ENCODE measurements at regions of chr11 and their contacts with region 1.

Region 1: DNA sequence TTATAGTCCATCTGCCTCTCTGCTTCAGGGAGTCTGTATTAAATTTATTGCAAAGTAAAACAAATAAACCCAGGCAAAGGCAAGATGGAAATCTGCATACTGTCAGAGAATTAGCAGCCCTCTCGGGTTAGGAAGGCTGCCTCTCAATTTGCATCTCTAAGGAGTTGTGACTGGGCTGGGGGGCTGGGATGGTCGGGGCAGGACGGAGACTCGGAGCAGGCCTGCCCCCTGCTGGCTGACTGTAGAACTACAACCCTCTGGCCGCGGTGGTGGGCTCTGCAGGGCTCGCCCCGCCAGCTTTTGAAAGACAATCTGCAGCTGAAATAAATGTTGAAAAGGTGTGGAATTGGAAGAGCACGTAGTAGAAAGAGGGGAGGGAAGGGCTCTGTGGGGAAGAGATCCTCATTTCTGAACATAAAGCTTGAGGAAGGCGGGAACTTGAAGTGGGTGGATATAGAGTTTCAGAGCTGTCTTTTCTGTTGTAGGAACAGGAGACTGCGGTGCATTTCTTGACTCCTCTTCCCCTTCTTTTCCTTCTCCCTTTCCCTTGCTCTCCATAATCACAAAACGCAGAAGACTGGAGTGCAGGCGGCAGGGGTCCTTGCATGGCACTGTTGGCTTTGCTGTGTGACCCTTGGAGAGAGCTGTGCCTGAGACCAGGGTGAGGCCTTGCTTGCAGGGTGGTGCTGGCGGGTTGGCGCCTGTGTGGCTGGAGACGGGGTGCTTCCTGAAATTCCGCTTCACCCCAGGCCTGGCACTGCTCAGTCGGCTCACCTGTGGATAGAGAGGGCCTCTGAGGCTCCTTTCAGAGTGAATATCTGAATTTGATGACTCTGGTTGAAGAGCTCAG is 22.6 kb upstream of the PKNOX2 start:
- DNase-seq: peak; percentile 59
- ATAC-seq: peak; percentile 89
- H3K4me3 Mint-ChIP-seq: no peak overlapping the region
- H3K27ac Mint-ChIP-seq: no peak overlapping the region
- H3K4me1 Mint-ChIP-seq: no peaks in the 10 kb centered on the region
- H3K27me3 Mint-ChIP-seq: peaks cover 28% of the 10 kb centered on the region

Region 2: DNA sequence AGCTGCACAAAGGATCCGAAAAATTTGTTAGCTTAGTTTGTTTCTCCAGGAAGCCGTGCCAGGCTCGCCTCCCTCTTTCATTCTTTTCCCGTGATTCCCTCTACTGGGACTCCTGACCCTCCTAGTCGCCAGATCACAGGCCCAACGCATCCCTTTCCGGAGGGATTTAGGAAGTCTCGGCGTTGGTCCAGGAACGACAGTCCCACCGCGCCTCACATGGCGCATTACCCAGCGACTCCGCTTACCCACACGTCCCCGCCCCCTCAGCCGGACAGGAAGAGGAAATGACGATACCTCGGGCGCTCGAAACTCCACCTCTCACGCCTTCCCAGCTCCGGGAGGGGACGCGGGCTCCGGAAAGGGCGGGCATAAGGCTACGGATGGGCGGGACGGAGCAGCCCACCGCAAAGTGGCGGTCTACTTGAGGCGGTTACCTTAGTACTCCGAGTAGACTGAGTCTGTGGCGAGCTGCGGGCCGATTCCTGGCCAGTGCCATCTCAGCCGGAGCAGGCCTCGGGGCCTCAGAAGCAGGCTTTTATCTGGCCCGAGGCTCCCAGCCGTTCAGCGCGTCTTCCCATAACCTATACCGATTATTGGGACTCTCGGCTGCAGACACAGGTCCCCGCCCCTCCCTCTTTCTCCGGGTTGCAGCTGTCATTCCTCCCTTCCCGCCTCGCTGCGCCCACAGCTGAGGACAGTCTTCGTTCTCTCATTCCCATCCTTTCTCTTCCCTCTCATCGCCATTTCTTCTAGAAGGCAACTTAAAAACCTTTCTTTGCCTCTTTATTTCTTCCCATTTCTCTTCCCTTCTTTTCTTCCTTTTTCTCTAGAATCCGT is 187.9 kb before region 1 on chr11 and contains the start of gene CCDC15:
- CTCF ChIA-PET with region 1: interaction called, 20 read pairs
- DNase-seq: peak; percentile 98
- ATAC-seq: peak; percentile 94
- H3K4me3 Mint-ChIP-seq: no peak within 1 kb of the TSS
- H3K27ac Mint-ChIP-seq: no peak within 1 kb of the TSS
- H3K4me1 Mint-ChIP-seq: peaks cover 20% of the 10 kb centered on the region
- H3K27me3 Mint-ChIP-seq: no peaks in the 10 kb centered on the region
- total RNA-seq, gene CCDC15: 5.6 to 9.4 TPM

Region 3: DNA sequence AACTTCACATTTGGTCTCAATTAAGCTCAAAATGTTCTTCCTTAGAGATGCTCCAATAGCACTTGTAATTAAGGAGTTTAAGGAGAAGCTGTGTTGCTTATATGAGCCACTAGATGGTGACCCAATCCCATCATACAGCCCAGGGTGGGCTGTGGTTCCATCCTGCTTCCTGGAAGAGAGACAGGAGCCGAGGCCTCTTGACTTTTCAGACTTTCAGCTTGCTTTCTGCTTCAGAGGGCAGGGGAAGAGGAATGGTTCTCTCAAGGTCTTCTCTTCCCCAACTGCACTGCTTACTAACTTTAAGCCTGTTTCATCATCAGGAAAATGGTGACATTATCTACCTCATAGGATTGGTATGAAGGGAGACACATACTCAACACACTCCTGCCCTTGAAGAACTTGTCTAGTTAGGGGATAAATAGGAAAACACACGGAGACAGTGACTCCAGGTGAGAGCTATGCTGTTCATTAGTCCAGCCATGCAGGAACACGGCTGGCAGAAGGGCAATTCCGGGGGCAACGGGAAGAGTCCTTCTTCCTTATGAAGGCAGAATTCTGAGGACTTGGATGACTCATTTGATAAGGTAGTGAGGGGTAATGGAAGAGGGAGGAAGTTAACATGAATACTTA is 50.5 kb before region 1 on chr11:
- CTCF ChIA-PET with region 1: interaction called, 32 read pairs
- DNase-seq: no peak
- ATAC-seq: peak; percentile 39
- H3K4me3 Mint-ChIP-seq: no peak overlapping the region
- H3K27ac Mint-ChIP-seq: no peak overlapping the region
- H3K4me1 Mint-ChIP-seq: peaks cover 2% of the 10 kb centered on the region
- H3K27me3 Mint-ChIP-seq: no peaks in the 10 kb centered on the region

Region 4: GRCh38 chr11:125123947-125124617 is 17.8 kb before region 1 on chr11:
- CTCF ChIA-PET with region 1: interaction called, 11 read pairs
- DNase-seq: peak; percentile 50
- ATAC-seq: peak; percentile 55
- H3K4me3 Mint-ChIP-seq: no peak overlapping the region
- H3K27ac Mint-ChIP-seq: no peak overlapping the region
- H3K4me1 Mint-ChIP-seq: no peaks in the 10 kb centered on the region
- H3K27me3 Mint-ChIP-seq: peaks cover 40% of the 10 kb centered on the region

Region 5: DNA sequence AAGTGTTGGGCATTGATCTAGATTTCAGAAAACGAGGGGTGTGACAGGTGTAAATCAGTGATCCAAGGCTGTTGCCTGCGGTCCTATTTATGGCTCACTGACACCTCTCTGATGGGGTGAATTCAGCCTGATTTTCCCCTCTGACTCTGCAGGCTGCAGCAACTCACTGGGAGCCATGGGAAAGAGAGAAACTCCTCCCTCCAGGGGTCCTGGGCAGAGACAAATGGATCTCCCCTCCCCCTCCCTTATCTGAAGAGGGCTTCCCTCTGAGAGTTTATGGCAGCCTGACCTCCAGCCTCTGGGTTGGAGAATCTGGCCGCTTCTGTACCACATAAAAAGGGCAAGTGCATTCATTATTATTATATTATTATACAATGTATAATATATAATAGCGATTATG is 20.8 kb after region 1 on chr11:
- CTCF ChIA-PET with region 1: no interaction called
- DNase-seq: no peak
- ATAC-seq: no peak
- H3K4me3 Mint-ChIP-seq: no peak overlapping the region
- H3K27ac Mint-ChIP-seq: no peak overlapping the region
- H3K4me1 Mint-ChIP-seq: peaks cover 13% of the 10 kb centered on the region
- H3K27me3 Mint-ChIP-seq: peaks cover 68% of the 10 kb centered on the region

Region 6: GRCh38 chr11:125176866-125177265 is 35.0 kb after region 1 on chr11:
- CTCF ChIA-PET with region 1: no interaction called
- DNase-seq: no peak
- ATAC-seq: no peak
- H3K4me3 Mint-ChIP-seq: no peak overlapping the region
- H3K27ac Mint-ChIP-seq: no peak overlapping the region
- H3K4me1 Mint-ChIP-seq: peaks cover 6% of the 10 kb centered on the region
- H3K27me3 Mint-ChIP-seq: peaks cover 44% of the 10 kb centered on the region

Measured in activated CD8-positive, alpha-beta memory T cell treated with anti-CD3 and anti-CD28 coated beads, Interleukin-2, amount 10 ng/mL, durations not matched to agents 7 days and 5 days (primary cell).